ENCODE measurements at regions of chr4 and their contacts with region 1.

Region 1: GRCh38 chr4:153344131-153345010 is at the start of gene MND1:
- DNase-seq: peak; percentile 58 to 64
- ATAC-seq: peak; percentile 90 to 94
- H3K4me3 ChIP-seq: peak within 1 kb of the TSS; percentile 70 to 97 (median 76)
- H3K27ac ChIP-seq: peak within 1 kb of the TSS in 1 of 4 donors; percentile 16
- H3K4me1 ChIP-seq: peaks cover 0 to 4% of the 10 kb centered on the region in 2 donors
- H3K27me3 ChIP-seq: no peaks in the 10 kb centered on the region
- CTCF ChIP-seq: peak; percentile 74 to 97 (median 87)
- POLR2A ChIP-seq: no peak
- total RNA-seq, gene MND1: 1.6 TPM in 1 of 4 donors, not detected in the others

Region 2: DNA sequence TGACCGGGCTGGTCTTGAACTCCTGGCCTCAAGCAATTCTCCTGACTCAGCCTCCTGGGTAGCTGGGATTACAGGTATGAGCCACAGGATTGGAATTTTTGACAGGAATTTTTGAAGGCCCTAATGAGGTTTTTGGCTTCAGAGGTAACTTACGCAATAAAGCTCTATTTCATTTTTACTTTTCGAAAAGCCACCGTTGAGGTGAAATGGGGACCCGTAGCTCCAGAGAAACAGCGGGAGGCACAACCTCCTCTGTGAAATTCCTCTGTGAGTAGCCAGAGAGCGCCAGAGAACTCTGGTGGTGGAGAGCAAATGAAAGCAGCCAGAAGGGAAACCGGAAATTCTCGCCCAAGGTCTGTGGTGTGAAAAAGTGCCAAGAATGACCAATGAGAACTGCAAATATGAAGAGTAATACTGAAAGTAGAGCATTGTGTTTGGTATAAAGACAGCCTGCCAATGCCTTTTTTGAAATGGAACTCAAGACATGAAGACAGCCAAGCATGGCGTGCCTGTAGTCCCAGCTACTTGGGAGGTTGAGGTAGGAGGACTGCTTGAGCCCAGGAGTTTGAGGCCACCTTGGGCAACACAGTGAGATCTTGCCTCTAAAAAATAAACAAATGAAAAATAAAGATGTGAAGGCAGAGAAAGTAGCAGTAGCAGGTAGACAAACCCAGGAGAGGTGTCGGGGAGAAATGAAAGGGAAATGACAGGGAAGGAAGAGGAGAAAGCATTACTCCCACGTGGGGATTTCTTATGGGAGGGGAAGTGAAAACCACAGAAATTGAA is 88.8 kb after region 1 on chr4:
- in situ Hi-C with region 1: no loop called
- intact Hi-C with region 1: loop called (anchors 10 kb)
- DNase-seq: peak; percentile 26 to 62
- ATAC-seq: peak; percentile 80 to 90
- H3K4me3 ChIP-seq: peak overlapping the region in 2 of 4 donors; percentile 19 to 22
- H3K27ac ChIP-seq: peak overlapping the region in 2 of 4 donors; percentile 20 to 51
- H3K4me1 ChIP-seq: peaks cover 5 to 7% of the 10 kb centered on the region in 2 donors
- H3K27me3 ChIP-seq: no peaks in the 10 kb centered on the region
- CTCF ChIP-seq: peak; percentile 60 to 70 (median 66)
- POLR2A ChIP-seq: no peak

Region 3: DNA sequence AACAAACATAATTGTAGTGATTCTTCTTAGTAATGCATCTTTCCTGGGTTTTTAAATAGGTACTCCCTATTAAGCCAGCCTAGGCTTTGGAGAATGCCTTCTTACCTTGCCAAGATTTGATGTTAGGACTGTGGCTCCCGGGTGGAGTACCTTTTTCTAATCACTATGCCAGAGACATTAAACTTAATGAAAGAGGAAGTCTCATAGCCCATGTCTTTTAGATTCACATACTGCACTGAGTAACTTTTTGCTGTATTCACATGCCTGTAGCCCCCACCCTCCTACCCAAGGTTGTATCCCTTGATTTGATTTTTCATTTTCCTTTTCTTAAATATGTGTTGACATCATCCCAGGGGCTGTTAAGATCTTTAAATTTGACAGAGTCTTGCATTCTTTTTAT is 235.5 kb after region 1 on chr4:
- in situ Hi-C with region 1: loop called in 2 of 4 experiments (anchors 5 to 10 kb)
- intact Hi-C with region 1: loop called (anchors 1 kb)
- DNase-seq: no peak
- ATAC-seq: no peak
- H3K4me3 ChIP-seq: no peak overlapping the region
- H3K27ac ChIP-seq: peak overlapping the region in 1 of 4 donors; percentile 43
- H3K4me1 ChIP-seq: peaks cover 2 to 3% of the 10 kb centered on the region in 2 donors
- H3K27me3 ChIP-seq: no peaks in the 10 kb centered on the region
- CTCF ChIP-seq: no peak
- POLR2A ChIP-seq: no peak

Region 4: GRCh38 chr4:153649572-153649991 is 305.2 kb after region 1 on chr4:
- in situ Hi-C with region 1: no loop called
- intact Hi-C with region 1: loop called (anchors 5 kb)
- DNase-seq: no peak
- ATAC-seq: no peak
- H3K4me3 ChIP-seq: no peak overlapping the region
- H3K27ac ChIP-seq: no peak overlapping the region
- H3K4me1 ChIP-seq: no peaks in the 10 kb centered on the region
- H3K27me3 ChIP-seq: no peaks in the 10 kb centered on the region
- CTCF ChIP-seq: peak in 1 of 5 experiments; percentile 13
- POLR2A ChIP-seq: no peak

Measured in gastrocnemius medialis (tissue), 4 donors.